BJ (cell line): ENCODE measurements at regions of chr15 and their contacts with region 1.

Region 1: GRCh38 chr15:32979710-32980109 is 214.8 kb downstream of the FMN1 start:
- DNase-seq: peak; percentile 85
- H3K4me3 ChIP-seq: no peak overlapping the region
- H3K27me3 ChIP-seq: no peaks in the 10 kb centered on the region
- CTCF ChIP-seq: no peak

Region 2: DNA sequence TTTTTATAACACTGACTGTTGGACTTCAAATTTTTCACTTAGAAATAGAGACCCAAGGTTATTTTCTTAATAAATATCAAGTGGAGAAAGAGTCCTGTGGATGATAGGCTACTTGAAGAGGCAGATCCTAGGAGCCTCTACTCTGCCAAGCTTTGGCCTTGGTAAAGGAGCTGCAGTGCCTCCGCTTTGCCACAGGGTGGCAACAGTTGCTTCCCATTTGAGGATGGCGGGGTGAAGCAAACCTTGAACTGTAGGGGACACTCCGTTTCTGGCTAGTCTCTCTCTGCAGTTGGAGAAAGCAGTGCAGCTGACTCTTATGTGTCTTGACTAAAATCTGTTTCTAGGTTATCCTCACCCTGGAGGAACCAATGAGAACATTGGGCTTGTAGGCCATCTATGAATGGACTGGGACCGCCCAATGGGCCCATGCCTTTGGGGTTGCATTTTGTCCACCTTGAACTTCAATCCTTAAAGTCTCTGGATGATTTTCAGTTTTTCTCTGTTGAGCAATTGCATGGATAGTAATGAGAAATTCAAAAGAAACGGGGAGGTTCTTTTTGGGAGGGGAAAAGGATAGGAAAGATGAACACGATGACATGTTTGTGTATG is 328.4 kb before region 1 on chr15:
- CTCF ChIA-PET with region 1: interaction called, 17 read pairs
- POLR2A ChIA-PET with region 1: no interaction called
- DNase-seq: no peak
- H3K4me3 ChIP-seq: no peak overlapping the region
- H3K27me3 ChIP-seq: no peaks in the 10 kb centered on the region; the same call in 1 of the 2 replicates
- CTCF ChIP-seq: peak; percentile 98

Region 3: DNA sequence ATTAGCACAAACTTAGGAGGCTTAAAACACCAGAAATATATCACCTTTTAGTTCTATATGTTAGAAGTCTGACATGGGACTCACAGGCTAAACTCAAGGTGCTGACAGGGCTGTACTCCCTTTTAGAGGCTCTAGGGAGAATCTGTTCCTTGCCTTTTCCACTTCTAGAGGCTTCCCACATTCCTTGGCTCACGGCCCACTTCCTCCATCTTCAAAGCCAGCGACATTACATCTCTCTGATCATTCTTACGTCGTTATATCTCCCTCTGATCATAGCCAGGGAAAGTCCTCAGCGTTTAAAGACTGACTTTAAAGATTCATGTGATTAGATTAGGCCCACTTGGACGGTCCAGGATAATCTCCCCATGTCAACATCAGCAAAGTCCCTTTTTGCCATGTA is 95.6 kb before region 1 on chr15:
- CTCF ChIA-PET with region 1: no interaction called
- POLR2A ChIA-PET with region 1: no interaction called
- DNase-seq: no peak
- H3K4me3 ChIP-seq: no peak overlapping the region
- H3K27me3 ChIP-seq: no peaks in the 10 kb centered on the region
- CTCF ChIP-seq: no peak

Region 4: GRCh38 chr15:33104212-33104611 is 124.5 kb after region 1 on chr15:
- CTCF ChIA-PET with region 1: no interaction called
- POLR2A ChIA-PET with region 1: interaction called, 24 read pairs
- DNase-seq: peak; percentile 74
- H3K4me3 ChIP-seq: no peak overlapping the region
- H3K27me3 ChIP-seq: no peaks in the 10 kb centered on the region
- CTCF ChIP-seq: no peak